ENCODE measurements at regions of chr11 and their contacts with region 1.

Region 1: DNA sequence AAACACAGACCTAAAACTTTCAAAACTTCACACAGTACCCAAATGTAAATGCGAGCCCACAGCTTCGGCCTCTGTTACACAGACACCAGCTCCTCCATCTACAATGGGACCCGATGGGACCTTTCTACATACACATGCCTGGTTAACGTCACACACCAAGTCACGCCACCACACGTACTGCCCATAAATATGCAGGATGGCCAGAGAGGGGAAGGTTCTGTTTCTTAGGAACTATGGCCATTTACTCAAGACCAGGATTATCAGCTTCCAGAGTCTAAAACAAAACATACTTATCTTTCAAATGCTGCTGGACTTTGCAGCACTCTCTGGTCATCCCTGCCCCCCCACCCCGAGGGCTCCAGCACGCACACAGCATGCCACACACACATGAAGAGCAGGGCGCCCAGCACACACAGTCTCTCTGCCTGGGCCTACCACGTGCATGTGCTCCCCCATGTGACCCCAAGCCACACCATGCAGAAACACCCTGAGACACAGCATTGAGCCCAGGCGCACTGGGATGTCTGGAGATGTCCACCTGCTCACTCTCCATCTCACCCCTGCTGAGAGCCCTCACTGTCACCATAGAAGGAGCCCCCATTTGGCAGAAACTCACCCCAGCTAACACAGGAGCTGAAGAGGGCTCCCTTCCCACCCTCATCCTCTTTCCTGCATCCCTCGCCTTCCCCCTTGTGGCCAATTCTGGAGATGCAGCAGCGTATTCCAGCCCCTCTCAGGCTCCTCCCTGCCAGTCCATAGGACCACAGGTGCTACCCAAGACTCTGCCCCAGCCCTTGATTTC is 61.8 kb downstream of the SLC22A12 start:
- DNase-seq: peak; percentile 84
- H3K4me3 ChIP-seq: no peak overlapping the region
- H3K27ac ChIP-seq: no peak overlapping the region
- H3K4me1 ChIP-seq: no peaks in the 10 kb centered on the region
- H3K27me3 ChIP-seq: no peaks in the 10 kb centered on the region
- CTCF ChIP-seq: peak; percentile 93 to 95 (median 93)
- POLR2A ChIP-seq: no peak

Region 2: GRCh38 chr11:64449557-64450167 is 203.1 kb before region 1 on chr11:
- intact Hi-C with region 1: loop called (anchors 10 kb)
- DNase-seq: peak; percentile 34 to 35
- H3K4me3 ChIP-seq: peak overlapping the region in 1 of 2 donors; percentile 27
- H3K27ac ChIP-seq: peak overlapping the region; percentile 36 to 46
- H3K4me1 ChIP-seq: peaks cover 0 to 15% of the 10 kb centered on the region in 2 donors
- H3K27me3 ChIP-seq: no peaks in the 10 kb centered on the region
- CTCF ChIP-seq: peak; percentile 45 to 75 (median 52)
- POLR2A ChIP-seq: no peak

Region 3: DNA sequence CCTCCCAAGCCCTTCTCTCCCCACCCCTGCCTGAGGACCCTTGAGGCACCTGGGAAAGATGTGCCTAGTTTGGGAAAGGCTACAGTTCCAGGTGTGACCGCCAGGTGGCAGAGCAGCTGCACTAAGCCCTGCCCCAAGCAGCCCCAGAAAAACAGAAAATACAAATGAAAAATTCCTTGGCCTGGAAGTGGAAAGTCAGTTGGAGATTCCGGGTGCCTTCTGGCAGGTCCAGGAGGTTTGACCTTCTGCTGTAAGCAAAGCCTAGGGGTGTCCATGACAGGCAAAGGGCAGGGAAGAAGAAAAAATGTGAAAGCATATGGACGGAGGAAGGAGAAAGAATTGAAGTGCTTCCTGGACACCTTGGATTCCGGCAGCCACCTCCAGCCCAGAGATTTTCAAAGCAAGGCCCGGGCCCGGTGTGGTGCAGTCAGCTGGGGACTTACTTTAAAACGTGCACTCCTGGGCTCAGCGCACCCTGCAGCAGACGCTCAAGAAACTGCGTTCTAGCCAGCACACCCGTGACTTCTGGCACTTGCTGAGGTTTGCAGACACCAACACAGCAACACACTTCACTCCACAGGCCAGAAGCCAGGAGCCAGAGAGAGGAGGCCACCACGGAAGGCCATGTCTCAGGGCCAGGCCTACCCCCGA is 99.1 kb before region 1 on chr11:
- intact Hi-C with region 1: loop called (anchors 5 kb)
- DNase-seq: peak; percentile 72 to 74
- H3K4me3 ChIP-seq: no peak overlapping the region
- H3K27ac ChIP-seq: peak overlapping the region; percentile 88 to 92
- H3K4me1 ChIP-seq: peaks cover 12 to 19% of the 10 kb centered on the region in 2 donors
- H3K27me3 ChIP-seq: no peaks in the 10 kb centered on the region
- CTCF ChIP-seq: peak; percentile 94 to 99 (median 96)
- POLR2A ChIP-seq: peak in 1 of 2 donors; percentile 5